WTC11 (cell line): ENCODE measurements at regions of chr12 and their contacts with region 1.

Region 1: DNA sequence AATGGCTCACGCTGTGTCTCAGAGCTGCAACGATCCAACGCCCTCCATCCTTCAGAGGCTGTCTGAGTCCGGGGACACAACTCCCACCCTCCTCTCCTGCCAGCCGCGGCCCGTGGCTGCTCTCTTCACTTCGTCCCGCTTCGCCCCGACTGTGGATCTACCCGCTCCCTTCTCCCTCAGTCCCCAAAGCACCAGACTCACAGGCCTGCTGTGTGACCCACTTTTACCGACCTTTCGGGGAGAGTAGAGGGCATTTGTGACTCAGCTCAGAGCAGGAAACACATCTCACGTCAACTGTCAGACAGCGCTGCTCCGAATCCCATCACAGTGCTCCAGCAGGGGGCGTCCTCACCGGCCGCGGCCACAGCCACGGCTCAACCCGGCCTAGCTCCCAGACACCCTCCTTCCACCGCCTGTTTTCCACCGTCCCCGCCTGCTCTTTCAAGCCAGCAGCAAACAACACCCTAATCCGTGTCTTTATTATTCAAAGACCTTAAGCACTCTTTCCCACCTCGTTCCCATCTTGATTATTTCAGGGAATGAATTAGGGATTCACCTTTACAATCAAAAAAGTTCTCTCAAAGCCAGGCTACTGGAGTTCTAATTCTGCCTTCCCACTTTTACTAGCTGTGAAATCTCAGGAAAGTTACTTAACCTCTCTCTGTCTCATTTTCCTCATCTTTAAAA is 5.0 kb upstream of the AQP2 start:
- DNase-seq: peak; percentile 90
- ATAC-seq: peak; percentile 95
- H3K4me3 Mint-ChIP-seq: peak overlapping the region; percentile 61
- H3K27ac Mint-ChIP-seq: 0 out of 2 replicates have a peak overlapping the region, but pooled peaks have one; percentile 18
- H3K4me1 Mint-ChIP-seq: peaks cover 40% of the 10 kb centered on the region
- H3K27me3 Mint-ChIP-seq: peaks cover 9% of the 10 kb centered on the region; the same call in 1 of the 2 replicates
- CTCF ChIP-seq: peak; percentile 69

Region 2: GRCh38 chr12:49842519-49843352 is 102.8 kb before region 1 on chr12 and contains the start of gene BCDIN3D:
- CTCF ChIA-PET with region 1: interaction called, 14 read pairs
- POLR2A ChIA-PET with region 1: no interaction called
- DNase-seq: peak; percentile 79
- ATAC-seq: peak; percentile 82
- H3K4me3 Mint-ChIP-seq: peak within 1 kb of the TSS; percentile 92
- H3K27ac Mint-ChIP-seq: peak within 1 kb of the TSS; percentile 98
- H3K4me1 Mint-ChIP-seq: peaks cover 13% of the 10 kb centered on the region
- H3K27me3 Mint-ChIP-seq: peaks cover 23% of the 10 kb centered on the region
- CTCF ChIP-seq: no peak
- total RNA-seq, gene BCDIN3D: 1.6 to 3.2 TPM (median 2.4 TPM) in 3 replicates

Region 3: GRCh38 chr12:49888461-49889151 is 56.9 kb before region 1 on chr12:
- CTCF ChIA-PET with region 1: interaction called, 29 read pairs
- POLR2A ChIA-PET with region 1: no interaction called
- DNase-seq: no peak
- ATAC-seq: no peak
- H3K4me3 Mint-ChIP-seq: no peak overlapping the region
- H3K27ac Mint-ChIP-seq: no peak overlapping the region
- H3K4me1 Mint-ChIP-seq: peaks cover 30% of the 10 kb centered on the region
- H3K27me3 Mint-ChIP-seq: no peaks in the 10 kb centered on the region; the same call in 1 of the 2 replicates
- CTCF ChIP-seq: no peak

Region 4: DNA sequence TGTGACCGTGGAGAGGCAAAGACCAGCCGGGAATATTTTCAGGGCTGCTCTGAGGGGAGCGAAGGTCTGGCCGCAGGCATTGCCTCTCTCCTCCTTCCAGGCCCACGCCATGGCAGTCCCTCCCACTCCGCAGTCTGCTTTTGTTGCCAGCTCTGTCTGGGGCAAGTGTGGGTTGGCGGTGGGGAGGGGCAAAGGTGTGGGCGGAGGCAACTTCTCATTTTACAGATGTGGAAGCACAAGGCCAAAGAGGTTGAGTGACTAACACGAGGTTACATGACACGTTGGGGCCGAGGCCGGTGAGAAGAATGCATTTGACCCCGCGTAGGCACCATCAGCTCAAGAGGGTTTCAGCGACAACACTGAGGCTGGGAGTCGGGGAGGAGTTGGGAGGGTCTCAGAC is 35.7 kb before region 1 on chr12:
- CTCF ChIA-PET with region 1: interaction called, 28 read pairs
- POLR2A ChIA-PET with region 1: no interaction called
- DNase-seq: peak; percentile 54
- ATAC-seq: peak; percentile 78
- H3K4me3 Mint-ChIP-seq: no peak overlapping the region
- H3K27ac Mint-ChIP-seq: no peak overlapping the region
- H3K4me1 Mint-ChIP-seq: peaks cover 35% of the 10 kb centered on the region
- H3K27me3 Mint-ChIP-seq: peaks cover 22% of the 10 kb centered on the region
- CTCF ChIP-seq: no peak

Region 5: DNA sequence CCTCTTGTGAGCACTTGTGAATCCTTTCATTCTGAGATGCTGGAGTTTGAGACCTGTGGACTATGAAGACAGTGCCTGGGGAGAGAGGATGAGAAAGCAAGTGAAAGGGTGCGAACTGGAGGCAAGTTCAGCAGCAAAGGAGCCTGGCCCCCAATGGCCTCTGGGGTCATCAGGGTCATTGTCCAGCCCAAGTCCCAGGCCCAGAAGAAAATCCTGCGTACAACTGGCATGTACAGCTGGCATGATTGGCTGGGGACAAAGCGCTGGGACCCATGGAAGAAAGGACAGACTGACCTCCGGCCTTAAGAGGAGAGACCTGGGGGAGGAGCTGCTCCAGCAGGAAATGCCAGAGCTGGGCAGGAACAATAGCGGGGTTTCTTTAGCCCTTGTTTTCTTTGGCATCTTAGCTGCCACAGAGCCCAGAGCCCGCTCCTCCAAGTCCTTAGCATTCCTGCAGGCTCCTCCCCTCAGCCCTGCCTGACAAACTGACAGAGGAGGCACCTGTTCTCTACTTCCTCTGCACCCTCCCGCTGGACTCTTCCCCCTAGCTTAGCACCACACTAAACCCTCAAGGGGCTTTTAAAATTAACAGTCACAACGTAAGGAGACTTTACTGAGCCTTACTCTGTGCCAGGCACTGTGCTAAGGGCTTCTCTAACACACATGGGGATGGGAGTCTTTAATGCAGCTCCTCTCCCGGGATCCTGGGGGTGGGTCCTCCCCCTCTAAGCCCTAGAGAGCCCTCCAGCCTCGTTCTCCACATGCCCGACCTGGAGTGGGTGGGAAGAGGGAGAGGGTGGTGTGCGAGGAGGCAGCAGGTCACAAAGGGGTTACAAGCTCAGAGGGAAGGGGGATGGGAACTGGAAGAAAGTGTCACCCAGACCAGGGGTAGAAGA is 14.3 kb after region 1 on chr12:
- CTCF ChIA-PET with region 1: interaction called, 168 read pairs
- POLR2A ChIA-PET with region 1: no interaction called
- DNase-seq: peak; percentile 61
- ATAC-seq: peak; percentile 72
- H3K4me3 Mint-ChIP-seq: peak overlapping the region; percentile 65
- H3K27ac Mint-ChIP-seq: no peak overlapping the region
- H3K4me1 Mint-ChIP-seq: peaks cover 24% of the 10 kb centered on the region
- H3K27me3 Mint-ChIP-seq: peaks cover 69% of the 10 kb centered on the region
- CTCF ChIP-seq: no peak

Region 6: GRCh38 chr12:50050410-50051098 is 105.0 kb after region 1 on chr12:
- CTCF ChIA-PET with region 1: interaction called, 15 read pairs
- POLR2A ChIA-PET with region 1: no interaction called
- DNase-seq: peak; percentile 65
- ATAC-seq: peak; percentile 52
- H3K4me3 Mint-ChIP-seq: peak overlapping the region; percentile 68
- H3K27ac Mint-ChIP-seq: no peak overlapping the region
- H3K4me1 Mint-ChIP-seq: peaks cover 16% of the 10 kb centered on the region
- H3K27me3 Mint-ChIP-seq: peaks cover 85% of the 10 kb centered on the region
- CTCF ChIP-seq: no peak

Region 7: DNA sequence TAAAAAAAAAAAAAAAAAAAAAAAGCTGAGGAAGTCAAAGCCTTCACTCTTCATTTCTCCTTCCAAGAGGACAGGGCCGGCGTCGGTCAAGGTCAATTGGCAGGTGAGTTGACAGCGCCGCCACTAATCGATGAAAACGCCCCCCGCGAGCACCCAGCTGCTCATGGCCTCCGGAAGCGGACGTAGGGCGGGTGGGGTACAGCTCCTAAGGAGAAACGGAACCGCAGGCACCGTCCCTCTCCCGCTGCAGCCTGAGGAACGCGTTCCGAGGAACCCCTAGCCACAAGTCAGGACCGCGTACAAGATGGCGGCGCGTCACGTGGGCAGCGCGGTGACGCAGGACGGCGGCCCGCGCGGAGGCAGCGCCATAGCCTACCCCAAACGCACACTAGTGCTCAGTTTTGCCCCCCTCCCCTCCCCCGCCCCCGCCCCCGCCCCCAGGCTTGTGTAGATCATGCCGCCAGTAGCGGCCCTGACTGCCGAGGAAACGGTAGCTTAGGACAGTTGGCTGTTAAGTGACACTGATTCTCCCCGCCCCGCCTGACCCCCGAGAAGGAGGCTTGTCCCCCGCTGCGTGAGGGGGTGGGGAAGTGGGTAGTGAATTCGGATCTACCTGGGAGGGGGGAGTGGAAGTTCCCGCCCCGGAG is 818.2 kb after region 1 on chr12 and contains the start of gene ATF1:
- CTCF ChIA-PET with region 1: no interaction called
- POLR2A ChIA-PET with region 1: interaction called, 10 read pairs
- DNase-seq: peak; percentile 89
- ATAC-seq: peak; percentile 86
- H3K4me3 Mint-ChIP-seq: peak within 1 kb of the TSS; percentile 91
- H3K27ac Mint-ChIP-seq: peak within 1 kb of the TSS; percentile 97
- H3K4me1 Mint-ChIP-seq: peaks cover 31% of the 10 kb centered on the region
- H3K27me3 Mint-ChIP-seq: no peaks in the 10 kb centered on the region
- CTCF ChIP-seq: no peak
- total RNA-seq, gene ATF1: 34.6 to 36.6 TPM (median 34.8 TPM) in 3 replicates